Activated CD4-positive, alpha-beta memory T cell treated with anti-CD3 and anti-CD28 coated beads, Interleukin-2, amount 10 ng/mL, durations not matched to agents 7 days and 5 days (primary cell): ENCODE measurements at regions of chr9 and their contacts with region 1.

Region 1: GRCh38 chr9:91361291-91362050 is at the start of gene AUH:
- DNase-seq: peak; percentile 88
- H3K4me3 Mint-ChIP-seq: peak within 1 kb of the TSS; percentile 99
- H3K27ac Mint-ChIP-seq: peak within 1 kb of the TSS; percentile 94
- H3K4me1 Mint-ChIP-seq: peaks cover 55% of the 10 kb centered on the region
- H3K27me3 Mint-ChIP-seq: no peaks in the 10 kb centered on the region
- total RNA-seq, gene AUH: 34.8 to 39.3 TPM

Region 2: DNA sequence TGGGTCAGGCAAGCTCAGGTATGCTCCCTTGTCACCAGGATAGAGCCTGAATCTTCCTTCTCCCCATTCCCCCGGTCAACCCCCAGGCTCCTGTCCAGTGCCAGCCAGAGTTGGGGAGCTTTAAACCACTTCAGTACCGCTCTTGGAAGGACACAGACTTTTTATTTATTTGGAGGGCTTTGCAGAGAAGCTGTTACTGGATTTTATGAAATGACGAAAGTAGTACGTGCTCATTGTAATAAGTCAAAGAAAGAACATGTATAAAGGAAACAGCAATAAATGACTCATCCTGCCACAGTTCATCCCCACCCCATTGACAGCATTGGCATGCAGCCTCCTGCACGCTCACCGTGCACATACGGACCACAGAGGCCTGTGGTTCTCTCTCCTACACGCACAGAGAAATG is 230.0 kb before region 1 on chr9:
- CTCF ChIA-PET with region 1: interaction called, 3 read pairs
- POLR2A ChIA-PET with region 1: interaction called, 26 read pairs
- DNase-seq: peak; percentile 90
- H3K4me3 Mint-ChIP-seq: peak overlapping the region; percentile 62
- H3K27ac Mint-ChIP-seq: peak overlapping the region; percentile 99
- H3K4me1 Mint-ChIP-seq: peaks cover 61% of the 10 kb centered on the region
- H3K27me3 Mint-ChIP-seq: no peaks in the 10 kb centered on the region

Region 3: GRCh38 chr9:91207729-91208418 is 153.6 kb before region 1 on chr9:
- CTCF ChIA-PET with region 1: no interaction called
- POLR2A ChIA-PET with region 1: interaction called, 15 read pairs
- DNase-seq: no peak
- H3K4me3 Mint-ChIP-seq: peak overlapping the region; percentile 58
- H3K27ac Mint-ChIP-seq: peak overlapping the region; percentile 86
- H3K4me1 Mint-ChIP-seq: peaks cover 57% of the 10 kb centered on the region
- H3K27me3 Mint-ChIP-seq: no peaks in the 10 kb centered on the region

Region 4: DNA sequence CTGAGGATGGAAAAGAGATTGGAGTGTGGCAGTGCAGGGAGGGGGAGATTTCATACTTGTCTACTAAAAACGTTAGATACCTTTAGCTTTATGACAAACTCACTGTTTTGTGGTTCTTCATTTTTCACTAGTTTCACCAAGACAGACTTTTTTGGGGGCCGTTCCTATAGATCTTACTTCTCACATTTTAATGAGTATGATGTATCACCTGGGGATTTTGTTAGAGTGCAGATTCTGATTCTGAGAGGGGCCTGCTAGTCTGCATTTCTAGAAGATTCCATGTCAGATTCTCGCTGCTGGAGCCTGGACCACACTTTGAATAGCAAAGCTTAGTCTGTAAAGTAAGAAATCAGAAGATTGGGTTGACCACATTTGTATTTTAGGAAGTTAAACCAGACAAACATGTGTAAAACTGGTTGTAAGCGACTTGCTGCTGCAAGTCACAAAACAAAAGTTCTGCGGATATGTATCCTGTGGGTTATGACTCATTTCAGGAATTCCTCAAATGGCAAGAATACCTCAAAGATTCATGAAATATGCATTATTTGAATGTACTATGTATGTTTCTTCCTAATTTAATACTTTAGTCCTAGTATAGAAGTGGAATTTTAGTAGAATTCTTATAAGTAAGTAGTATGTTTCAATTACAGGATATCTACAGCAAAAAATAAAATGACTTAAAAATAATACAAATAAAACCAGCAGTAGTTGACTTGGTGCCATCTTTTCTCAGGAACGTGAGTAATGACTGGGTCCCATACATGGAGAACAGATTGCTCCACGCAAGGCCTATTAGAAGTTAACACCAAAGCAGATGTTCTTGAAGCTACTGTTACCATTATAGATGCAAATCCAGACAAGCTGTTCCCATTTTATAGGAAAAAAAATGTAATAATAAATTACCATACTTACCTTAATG is 34.3 kb after region 1 on chr9:
- CTCF ChIA-PET with region 1: no interaction called
- POLR2A ChIA-PET with region 1: interaction called, 36 read pairs
- DNase-seq: peak; percentile 29
- H3K4me3 Mint-ChIP-seq: peak overlapping the region; percentile 41
- H3K27ac Mint-ChIP-seq: peak overlapping the region; percentile 77
- H3K4me1 Mint-ChIP-seq: peaks cover 26% of the 10 kb centered on the region
- H3K27me3 Mint-ChIP-seq: no peaks in the 10 kb centered on the region

Region 5: GRCh38 chr9:91775011-91775707 is 413.7 kb after region 1 on chr9:
- CTCF ChIA-PET with region 1: no interaction called
- POLR2A ChIA-PET with region 1: no interaction called
- DNase-seq: peak; percentile 78
- H3K4me3 Mint-ChIP-seq: no peak overlapping the region
- H3K27ac Mint-ChIP-seq: no peak overlapping the region
- H3K4me1 Mint-ChIP-seq: peaks cover 11% of the 10 kb centered on the region
- H3K27me3 Mint-ChIP-seq: peaks cover 22% of the 10 kb centered on the region